ENCODE measurements at regions of chrX and their contacts with region 1.

Region 1: GRCh38 chrX:135484641-135485289 is 35.7 kb upstream of the INTS6L start:
- DNase-seq: peak; percentile 39 to 78
- H3K4me3 ChIP-seq: no peak overlapping the region
- H3K4me1 ChIP-seq: 0 out of 2 replicates have a peak, but pooled peaks cover 2% of the 10 kb centered on the region
- H3K27me3 ChIP-seq: no peaks in the 10 kb centered on the region

Region 2: GRCh38 chrX:135050603-135051002 is 434.2 kb before region 1 on chrX:
- in situ Hi-C with region 1: no loop called
- DNase-seq: no peak
- H3K4me3 ChIP-seq: peak overlapping the region; percentile 37
- H3K4me1 ChIP-seq: peaks cover 14% of the 10 kb centered on the region
- H3K27me3 ChIP-seq: no peaks in the 10 kb centered on the region

Region 3: DNA sequence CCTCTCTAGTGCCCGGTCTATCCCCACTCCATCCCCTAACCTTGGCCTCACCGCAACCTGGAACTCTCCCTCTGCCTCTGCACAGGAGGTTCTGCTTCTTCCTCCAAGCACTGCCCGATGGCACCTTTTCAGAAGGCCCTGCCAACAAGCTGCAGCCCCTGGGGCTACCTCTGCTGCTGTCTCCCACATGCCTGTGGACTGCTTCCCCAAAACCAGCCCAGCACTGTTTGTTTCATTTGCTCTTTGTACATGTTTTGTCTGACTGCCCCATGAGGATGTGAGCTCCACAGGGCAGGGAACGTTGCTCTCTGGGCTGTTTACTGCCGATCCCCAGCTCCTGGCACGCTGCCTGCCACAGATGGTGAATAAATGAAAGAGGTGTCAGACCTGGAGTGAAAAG is 121.1 kb after region 1 on chrX:
- in situ Hi-C with region 1: loop called (anchors 10 kb)
- DNase-seq: no peak
- H3K4me3 ChIP-seq: no peak overlapping the region
- H3K4me1 ChIP-seq: peaks cover 9% of the 10 kb centered on the region
- H3K27me3 ChIP-seq: 0 out of 2 replicates have a peak, but pooled peaks cover 3% of the 10 kb centered on the region

Region 4: GRCh38 chrX:135890087-135890585 is 405.4 kb after region 1 on chrX:
- in situ Hi-C with region 1: no loop called
- DNase-seq: no peak
- H3K4me3 ChIP-seq: no peak overlapping the region
- H3K4me1 ChIP-seq: no peaks in the 10 kb centered on the region
- H3K27me3 ChIP-seq: 0 out of 2 replicates have a peak, but pooled peaks cover 5% of the 10 kb centered on the region

Measured in HAP-1 (cell line).